ENCODE measurements at regions of chr10 and their contacts with region 1.

Region 1: GRCh38 chr10:101050208-101051069 is 11.3 kb upstream of the KAZALD1 start:
- DNase-seq: peak; percentile 83
- ATAC-seq: peak; percentile 97
- H3K4me3 Mint-ChIP-seq: no peak overlapping the region
- H3K27ac Mint-ChIP-seq: no peak overlapping the region
- H3K4me1 Mint-ChIP-seq: peaks cover 9% of the 10 kb centered on the region
- H3K27me3 Mint-ChIP-seq: peaks cover 48% of the 10 kb centered on the region
- CTCF ChIP-seq: peak; percentile 88

Region 2: GRCh38 chr10:101005366-101005765 is 45.1 kb before region 1 on chr10:
- CTCF ChIA-PET with region 1: interaction called, 10 read pairs
- POLR2A ChIA-PET with region 1: no interaction called
- intact Hi-C with region 1: no loop called
- DNase-seq: no peak
- ATAC-seq: no peak
- H3K4me3 Mint-ChIP-seq: no peak overlapping the region
- H3K27ac Mint-ChIP-seq: no peak overlapping the region
- H3K4me1 Mint-ChIP-seq: peaks cover 3% of the 10 kb centered on the region
- H3K27me3 Mint-ChIP-seq: no peaks in the 10 kb centered on the region
- CTCF ChIP-seq: no peak

Region 3: GRCh38 chr10:101012525-101013364 is 37.7 kb before region 1 on chr10:
- CTCF ChIA-PET with region 1: interaction called, 114 read pairs
- POLR2A ChIA-PET with region 1: no interaction called
- intact Hi-C with region 1: no loop called
- DNase-seq: peak; percentile 92
- ATAC-seq: peak; percentile 90
- H3K4me3 Mint-ChIP-seq: no peak overlapping the region
- H3K27ac Mint-ChIP-seq: no peak overlapping the region
- H3K4me1 Mint-ChIP-seq: peaks cover 24% of the 10 kb centered on the region
- H3K27me3 Mint-ChIP-seq: peaks cover 19% of the 10 kb centered on the region
- CTCF ChIP-seq: peak; percentile 97

Region 4: GRCh38 chr10:101031128-101031795 is 19.2 kb before region 1 on chr10 and contains the starts of genes PDZD7 and SFXN3:
- CTCF ChIA-PET with region 1: interaction called, 655 read pairs
- POLR2A ChIA-PET with region 1: interaction called, 8 read pairs
- intact Hi-C with region 1: no loop called
- DNase-seq: peak; percentile 98
- ATAC-seq: peak; percentile 79
- H3K4me3 Mint-ChIP-seq: peak within 1 kb of the TSS; percentile 78
- H3K27ac Mint-ChIP-seq: peak within 1 kb of the TSS; percentile 90
- H3K4me1 Mint-ChIP-seq: peaks cover 10% of the 10 kb centered on the region
- H3K27me3 Mint-ChIP-seq: peaks cover 6% of the 10 kb centered on the region
- CTCF ChIP-seq: no peak
- total RNA-seq, gene PDZD7: 0.25 to 0.65 TPM
- total RNA-seq, gene SFXN3: 28.8 to 29.6 TPM

Region 5: GRCh38 chr10:101075775-101076174 is 25.3 kb after region 1 on chr10:
- CTCF ChIA-PET with region 1: interaction called, 655 read pairs
- POLR2A ChIA-PET with region 1: no interaction called
- intact Hi-C with region 1: no loop called
- DNase-seq: peak; percentile 24
- ATAC-seq: peak; percentile 62
- H3K4me3 Mint-ChIP-seq: no peak overlapping the region
- H3K27ac Mint-ChIP-seq: no peak overlapping the region
- H3K4me1 Mint-ChIP-seq: peaks cover 4% of the 10 kb centered on the region
- H3K27me3 Mint-ChIP-seq: peaks cover 48% of the 10 kb centered on the region
- CTCF ChIP-seq: no peak